ENCODE measurements at regions of chr17 and their contacts with region 1.

Region 1: GRCh38 chr17:64420143-64420971 is 28.6 kb upstream of the MILR1 start:
- DNase-seq: no peak
- ATAC-seq: peak; percentile 85
- H3K4me3 ChIP-seq: no peak overlapping the region
- H3K27ac ChIP-seq: no peak overlapping the region
- H3K4me1 ChIP-seq: no peaks in the 10 kb centered on the region
- H3K27me3 ChIP-seq: no peaks in the 10 kb centered on the region

Region 2: DNA sequence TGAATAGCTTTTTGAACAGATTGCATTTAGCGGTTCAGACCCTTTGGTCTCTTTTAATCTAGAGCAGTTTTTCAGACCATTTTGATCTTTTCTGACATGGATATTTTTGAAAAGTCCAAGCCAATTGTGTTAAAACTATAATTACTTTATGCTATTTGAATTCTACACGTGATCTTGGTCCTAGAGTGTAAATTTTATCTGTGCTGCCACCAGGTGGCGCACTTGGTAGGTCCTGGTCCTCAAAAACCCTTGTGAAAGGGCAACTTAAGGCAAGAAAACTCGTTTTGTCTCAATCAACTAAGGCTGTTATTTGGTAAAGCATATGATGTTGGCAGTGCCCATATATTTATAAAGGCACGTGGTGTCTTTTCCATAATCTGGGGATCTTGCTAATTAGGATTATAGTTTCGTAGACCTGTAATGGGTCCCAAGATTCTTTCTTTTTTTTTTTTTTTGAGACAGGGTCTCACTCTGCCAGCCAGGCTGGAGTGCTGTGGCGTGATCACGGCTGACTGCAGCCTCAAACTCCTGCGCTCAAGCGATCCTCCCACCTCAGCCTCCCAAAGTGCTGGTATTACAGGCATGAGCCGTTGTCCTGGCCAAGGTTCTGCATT is 113.4 kb before region 1 on chr17:
- intact Hi-C with region 1: loop called (anchors 2 kb)
- DNase-seq: peak; percentile 83
- ATAC-seq: peak; percentile 69
- H3K4me3 ChIP-seq: no peak overlapping the region
- H3K27ac ChIP-seq: no peak overlapping the region
- H3K4me1 ChIP-seq: peaks cover 0 to 2% of the 10 kb centered on the region in 2 donors
- H3K27me3 ChIP-seq: no peaks in the 10 kb centered on the region

Region 3: DNA sequence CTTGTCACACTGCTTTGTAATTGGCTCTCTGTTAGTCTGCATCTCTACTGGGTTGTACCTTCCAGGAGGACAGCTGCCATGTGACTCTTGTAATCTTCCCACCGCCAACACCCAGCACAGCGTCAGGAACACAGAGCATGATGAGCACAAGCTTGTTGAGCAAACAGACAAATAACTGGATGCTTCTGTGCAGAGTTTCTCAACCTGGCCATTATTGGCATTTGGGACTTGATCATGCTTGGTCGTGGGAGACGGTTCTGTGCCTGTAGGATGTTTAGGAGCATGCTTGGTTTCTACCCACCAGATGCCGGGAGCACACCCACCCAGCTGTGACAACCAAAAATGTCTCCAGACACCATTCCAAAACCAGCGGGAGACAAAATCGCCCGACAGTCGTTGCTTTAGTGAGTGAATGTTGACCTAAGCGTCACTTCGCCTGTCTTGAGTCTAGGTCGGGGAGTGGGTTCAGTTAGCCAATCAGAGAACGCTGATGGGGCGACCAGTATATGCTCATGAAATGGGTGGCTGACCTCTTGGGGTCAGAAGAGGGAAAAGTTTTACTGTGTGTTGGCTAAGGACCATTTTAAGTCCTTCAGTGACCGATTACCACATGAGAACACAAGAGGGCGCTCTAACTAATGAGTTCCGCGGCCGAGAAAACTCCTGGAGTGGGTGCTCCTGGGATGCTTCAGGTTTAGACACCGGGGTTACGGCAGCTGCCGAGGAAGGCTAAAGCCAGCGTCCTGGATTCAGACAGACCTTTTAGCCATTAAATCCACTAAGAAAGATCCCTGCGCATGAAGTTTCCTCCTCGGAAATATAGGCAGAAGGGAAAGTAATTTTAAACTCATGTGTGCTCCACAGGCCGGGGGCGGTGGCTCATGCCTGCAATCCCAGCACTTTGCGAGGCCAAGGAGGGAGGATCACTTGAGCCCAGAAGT is 99.5 kb before region 1 on chr17:
- intact Hi-C with region 1: loop called (anchors 5 kb)
- DNase-seq: peak in 1 of 2 donors; percentile 66
- ATAC-seq: peak; percentile 83
- H3K4me3 ChIP-seq: no peak overlapping the region
- H3K27ac ChIP-seq: no peak overlapping the region
- H3K4me1 ChIP-seq: no peaks in the 10 kb centered on the region
- H3K27me3 ChIP-seq: no peaks in the 10 kb centered on the region

Region 4: DNA sequence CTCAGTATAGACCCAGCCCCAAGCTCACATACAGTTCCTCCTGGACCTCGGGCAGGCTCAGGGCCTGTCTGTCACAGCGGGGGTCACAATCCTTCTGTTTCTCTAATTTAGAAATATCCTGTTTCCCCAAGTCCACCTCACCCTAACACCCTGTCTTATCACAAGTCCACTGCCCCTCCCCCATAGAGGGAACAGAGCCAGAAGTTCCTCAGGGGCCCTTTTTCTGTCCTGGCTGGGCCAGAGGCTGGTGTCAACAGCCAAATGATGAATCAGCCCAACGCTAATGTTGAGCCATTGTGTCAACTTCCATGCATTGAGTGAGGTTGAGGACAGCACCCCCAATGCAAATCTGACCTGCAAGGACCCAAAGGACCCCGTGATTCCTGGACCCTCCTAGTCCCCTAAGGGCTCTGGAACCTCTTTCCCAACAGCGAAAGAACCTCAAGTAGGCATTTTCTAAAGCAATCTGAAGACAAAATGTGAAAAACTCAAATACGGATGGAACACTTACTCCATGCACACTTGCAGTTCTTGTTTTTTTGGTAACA is 88.3 kb before region 1 on chr17:
- intact Hi-C with region 1: no loop called
- DNase-seq: peak in 1 of 2 donors; percentile 80
- ATAC-seq: peak; percentile 35
- H3K4me3 ChIP-seq: no peak overlapping the region
- H3K27ac ChIP-seq: no peak overlapping the region
- H3K4me1 ChIP-seq: no peaks in the 10 kb centered on the region
- H3K27me3 ChIP-seq: no peaks in the 10 kb centered on the region

Region 5: DNA sequence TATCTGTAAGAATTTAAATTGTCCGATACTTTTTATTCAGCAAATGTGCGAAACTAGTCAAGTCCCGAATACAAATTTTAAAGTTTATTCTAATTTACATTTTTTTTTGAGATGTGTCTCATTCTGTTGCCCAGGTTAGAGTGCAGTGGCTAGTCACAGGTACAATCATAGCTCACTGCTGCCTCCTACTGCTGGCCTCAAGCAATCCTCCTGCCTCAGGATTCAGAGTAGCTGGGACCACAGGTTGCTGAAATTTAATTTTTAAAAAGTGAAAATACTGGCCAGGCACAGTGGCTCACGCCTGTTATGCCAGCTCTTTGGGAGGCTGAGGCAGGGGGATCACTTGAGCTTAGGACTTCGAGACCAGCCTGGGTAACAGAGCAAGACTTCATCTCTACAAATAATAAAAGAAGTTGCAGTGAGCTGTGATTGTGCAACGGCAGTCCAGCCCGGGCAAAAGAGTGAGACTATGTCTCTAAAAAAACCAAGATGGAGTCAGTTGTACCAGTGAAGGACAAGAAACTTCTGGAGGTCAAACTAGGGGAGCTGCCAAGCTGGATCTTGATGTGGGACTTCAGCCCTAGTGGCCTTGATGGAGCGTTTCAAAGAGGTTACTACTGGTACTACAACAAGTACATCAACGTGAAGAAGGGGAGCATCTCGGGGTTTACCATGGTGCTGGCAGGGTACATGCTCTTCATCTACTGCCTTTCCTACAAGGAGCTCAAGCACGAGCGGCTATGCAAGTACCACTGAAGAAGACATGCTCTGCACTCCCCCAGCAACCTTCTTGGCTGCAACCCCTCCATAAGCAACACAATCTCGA is 70.9 kb after region 1 on chr17:
- intact Hi-C with region 1: loop called in 1 of 2 experiments (anchors 5 kb)
- DNase-seq: no peak
- ATAC-seq: no peak
- H3K4me3 ChIP-seq: no peak overlapping the region
- H3K27ac ChIP-seq: no peak overlapping the region
- H3K4me1 ChIP-seq: no peaks in the 10 kb centered on the region
- H3K27me3 ChIP-seq: no peaks in the 10 kb centered on the region